ENCODE measurements at regions of chr12 and their contacts with region 1.

Region 1: DNA sequence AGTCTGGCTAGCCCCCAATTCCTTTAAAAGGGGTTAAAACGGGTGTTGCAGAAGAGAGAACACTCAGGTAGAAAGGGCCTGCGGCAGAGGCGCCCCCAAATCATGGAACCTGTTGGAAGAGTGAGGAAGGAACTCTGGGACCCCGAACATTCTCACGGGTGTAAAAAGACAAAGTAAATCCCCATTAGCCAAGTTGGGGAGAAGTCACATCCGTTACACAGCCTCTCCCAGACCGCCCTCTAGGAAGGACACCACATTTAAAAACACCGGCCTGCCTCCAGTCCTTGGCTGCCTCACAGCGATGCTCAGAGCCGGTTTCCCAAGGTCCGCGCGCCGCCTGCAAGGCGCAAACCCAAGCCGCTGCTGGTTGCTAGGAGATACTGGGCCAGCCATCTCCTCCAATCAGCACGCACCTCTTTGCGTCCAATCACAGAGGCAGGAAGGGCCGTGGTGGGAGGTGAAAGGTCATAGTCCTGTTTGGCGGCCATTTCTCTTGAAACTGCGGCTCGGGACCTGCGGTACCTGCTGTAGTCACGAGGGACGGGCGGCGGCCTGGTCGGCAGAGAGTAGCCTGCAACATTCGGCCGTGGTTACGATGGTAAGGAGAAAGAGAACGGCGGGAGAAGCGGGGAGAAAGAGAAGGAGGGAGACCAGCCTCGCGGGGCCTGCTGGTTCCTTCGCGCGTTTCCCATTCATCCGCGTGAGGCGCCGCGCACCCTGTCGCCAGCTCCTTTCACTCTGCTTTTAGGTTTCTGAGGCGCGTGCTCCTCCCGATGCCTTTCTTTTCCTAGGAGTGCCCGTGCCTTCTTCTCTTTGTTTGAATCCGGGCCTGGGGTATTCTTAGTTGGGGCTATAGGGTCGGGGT is at the start of gene SNRPF:
- DNase-seq: peak; percentile 88 to 96 (median 92)
- ATAC-seq: peak; percentile 98
- H3K4me3 ChIP-seq: peak within 1 kb of the TSS; percentile 82
- H3K4me3 Mint-ChIP-seq: no peak within 1 kb of the TSS
- H3K27ac ChIP-seq: peak within 1 kb of the TSS; percentile 86
- H3K27ac Mint-ChIP-seq: no peak within 1 kb of the TSS
- H3K4me1 ChIP-seq: peaks cover 11 to 12% of the 10 kb centered on the region in 2 donors
- H3K4me1 Mint-ChIP-seq: peaks cover 13 to 27% (median 16%) of the 10 kb centered on the region in 7 donors
- H3K27me3 ChIP-seq: no peaks in the 10 kb centered on the region
- H3K27me3 Mint-ChIP-seq: peaks cover 3 to 11% (median 7%) of the 10 kb centered on the region in 5 donors
- total RNA-seq, gene SNRPF: 19.0 to 40.4 (median 21.7) TPM

Region 2: GRCh38 chr12:95506707-95507523 is 351.8 kb before region 1 on chr12:
- CTCF ChIA-PET with region 1: no interaction called
- POLR2A ChIA-PET with region 1: no interaction called
- intact Hi-C with region 1: no loop called
- DNase-seq: no peak
- ATAC-seq: no peak
- H3K4me3 ChIP-seq: no peak overlapping the region
- H3K4me3 Mint-ChIP-seq: no peak overlapping the region
- H3K27ac ChIP-seq: no peak overlapping the region
- H3K27ac Mint-ChIP-seq: peak overlapping the region in 1 of 9 donors; percentile 24
- H3K4me1 ChIP-seq: no peaks in the 10 kb centered on the region
- H3K4me1 Mint-ChIP-seq: peaks cover 8 to 32% (median 16%) of the 10 kb centered on the region in 7 donors
- H3K27me3 ChIP-seq: no peaks in the 10 kb centered on the region
- H3K27me3 Mint-ChIP-seq: no peaks in the 10 kb centered on the region

Region 3: GRCh38 chr12:95548539-95549391 is 309.9 kb before region 1 on chr12:
- CTCF ChIA-PET with region 1: no interaction called
- POLR2A ChIA-PET with region 1: no interaction called
- intact Hi-C with region 1: loop called in 1 of 2 experiments (anchors 1 kb)
- DNase-seq: peak; percentile 66 to 81 (median 77)
- ATAC-seq: peak; percentile 94
- H3K4me3 ChIP-seq: peak overlapping the region; percentile 75
- H3K4me3 Mint-ChIP-seq: peak overlapping the region; percentile 89 to 96 (median 94)
- H3K27ac ChIP-seq: peak overlapping the region; percentile 96
- H3K27ac Mint-ChIP-seq: peak overlapping the region; percentile 70 to 98 (median 94)
- H3K4me1 ChIP-seq: peaks cover 6 to 23% of the 10 kb centered on the region in 2 donors
- H3K4me1 Mint-ChIP-seq: peaks cover 36 to 73% (median 61%) of the 10 kb centered on the region in 7 donors
- H3K27me3 ChIP-seq: no peaks in the 10 kb centered on the region
- H3K27me3 Mint-ChIP-seq: peaks cover 0 to 22% (median 7%) of the 10 kb centered on the region in 5 donors

Region 4: GRCh38 chr12:95884998-95885397 is 26.3 kb after region 1 on chr12:
- CTCF ChIA-PET with region 1: no interaction called
- POLR2A ChIA-PET with region 1: no interaction called
- intact Hi-C with region 1: no loop called
- DNase-seq: no peak
- ATAC-seq: no peak
- H3K4me3 ChIP-seq: no peak overlapping the region
- H3K4me3 Mint-ChIP-seq: no peak overlapping the region
- H3K27ac ChIP-seq: no peak overlapping the region
- H3K27ac Mint-ChIP-seq: no peak overlapping the region
- H3K4me1 ChIP-seq: no peaks in the 10 kb centered on the region
- H3K4me1 Mint-ChIP-seq: no peaks in the 10 kb centered on the region
- H3K27me3 ChIP-seq: no peaks in the 10 kb centered on the region
- H3K27me3 Mint-ChIP-seq: peaks cover 0 to 4% (median 0%) of the 10 kb centered on the region in 5 donors

Region 5: DNA sequence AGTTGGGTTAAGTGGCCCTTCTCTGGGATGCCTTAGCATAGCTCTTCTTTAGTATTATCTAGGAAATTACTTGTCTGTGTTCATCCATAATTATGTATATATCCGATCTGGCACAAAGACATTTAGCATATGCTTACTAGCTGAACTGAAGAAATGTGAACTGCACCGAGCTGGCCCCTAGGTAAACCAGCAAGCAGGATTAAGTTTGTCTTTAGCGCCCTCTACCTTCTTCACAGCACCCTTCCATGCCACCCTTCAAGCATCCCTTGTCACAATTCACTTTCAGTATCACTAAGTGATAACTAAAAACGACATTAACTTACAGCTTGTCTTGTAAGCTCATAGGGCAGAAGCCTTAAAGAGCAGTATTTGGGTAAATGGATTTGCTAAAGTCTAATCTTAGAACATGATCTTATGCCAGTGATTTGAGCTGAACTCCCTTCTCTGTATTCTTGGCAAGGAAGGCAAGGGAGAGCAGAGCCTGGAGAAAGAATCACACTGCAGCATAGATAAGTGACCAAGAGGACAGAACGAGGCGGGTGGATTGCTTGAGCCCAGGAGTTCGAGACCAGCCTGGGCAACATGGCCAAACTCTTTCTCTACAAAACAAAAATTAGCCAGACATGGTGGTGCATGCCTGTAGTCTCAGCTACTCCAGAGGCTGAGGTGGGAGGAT is 140.0 kb after region 1 on chr12:
- CTCF ChIA-PET with region 1: no interaction called
- POLR2A ChIA-PET with region 1: no interaction called
- intact Hi-C with region 1: loop called (anchors 2 to 5 kb)
- DNase-seq: peak in 7 of 9 donors; percentile 44 to 69 (median 58)
- ATAC-seq: peak; percentile 96
- H3K4me3 ChIP-seq: no peak overlapping the region
- H3K4me3 Mint-ChIP-seq: peak overlapping the region in 1 of 10 donors; percentile 11
- H3K27ac ChIP-seq: no peak overlapping the region
- H3K27ac Mint-ChIP-seq: peak overlapping the region in 5 of 9 donors; percentile 2 to 68 (median 16)
- H3K4me1 ChIP-seq: no peaks in the 10 kb centered on the region
- H3K4me1 Mint-ChIP-seq: peaks cover 0 to 13% (median 3%) of the 10 kb centered on the region in 7 donors
- H3K27me3 ChIP-seq: no peaks in the 10 kb centered on the region
- H3K27me3 Mint-ChIP-seq: no peaks in the 10 kb centered on the region

Region 6: DNA sequence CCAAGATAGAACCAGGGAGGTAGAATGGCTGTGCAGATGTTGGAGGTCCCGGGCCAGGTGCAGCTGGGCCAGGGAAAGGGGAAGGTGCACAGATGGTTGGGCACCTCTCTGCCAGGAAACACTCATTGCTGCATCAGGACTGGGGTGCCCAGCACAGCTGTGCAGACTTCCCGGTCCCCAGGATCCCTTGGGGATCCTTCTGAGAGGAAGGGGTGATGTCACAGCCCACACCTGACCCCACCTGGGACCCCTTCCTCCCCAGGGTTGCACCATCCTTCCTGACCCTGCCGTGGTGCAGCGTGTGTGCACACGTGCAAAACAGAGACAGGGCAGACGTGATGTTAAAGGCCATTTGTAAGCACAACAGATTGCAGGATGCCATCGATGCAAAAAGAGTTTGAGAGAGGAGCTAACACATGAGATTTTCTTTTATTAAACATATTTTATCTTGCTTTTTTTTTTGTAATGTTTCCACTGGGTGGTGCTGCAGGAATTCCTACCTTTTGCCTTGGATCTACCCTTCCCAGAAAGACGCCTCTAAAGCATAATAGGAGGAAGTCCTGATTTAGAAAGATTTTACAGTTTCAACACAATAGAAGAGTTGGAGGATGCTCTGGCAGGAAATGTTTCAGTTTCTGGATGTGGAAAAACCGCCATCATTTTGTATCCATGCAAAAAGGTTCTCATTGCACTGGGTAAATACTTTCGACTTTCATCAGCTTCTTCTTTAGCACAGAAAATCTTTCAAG is 350.3 kb after region 1 on chr12:
- CTCF ChIA-PET with region 1: no interaction called
- POLR2A ChIA-PET with region 1: no interaction called
- intact Hi-C with region 1: no loop called
- DNase-seq: no peak
- ATAC-seq: peak; percentile 15
- H3K4me3 ChIP-seq: no peak overlapping the region
- H3K4me3 Mint-ChIP-seq: peak overlapping the region; percentile 69 to 97 (median 85)
- H3K27ac ChIP-seq: peak overlapping the region; percentile 62
- H3K27ac Mint-ChIP-seq: peak overlapping the region; percentile 50 to 99 (median 96)
- H3K4me1 ChIP-seq: peaks cover 64 to 93% of the 10 kb centered on the region in 2 donors
- H3K4me1 Mint-ChIP-seq: peaks cover 70 to 100% (median 98%) of the 10 kb centered on the region in 7 donors
- H3K27me3 ChIP-seq: no peaks in the 10 kb centered on the region
- H3K27me3 Mint-ChIP-seq: no peaks in the 10 kb centered on the region

Region 7: DNA sequence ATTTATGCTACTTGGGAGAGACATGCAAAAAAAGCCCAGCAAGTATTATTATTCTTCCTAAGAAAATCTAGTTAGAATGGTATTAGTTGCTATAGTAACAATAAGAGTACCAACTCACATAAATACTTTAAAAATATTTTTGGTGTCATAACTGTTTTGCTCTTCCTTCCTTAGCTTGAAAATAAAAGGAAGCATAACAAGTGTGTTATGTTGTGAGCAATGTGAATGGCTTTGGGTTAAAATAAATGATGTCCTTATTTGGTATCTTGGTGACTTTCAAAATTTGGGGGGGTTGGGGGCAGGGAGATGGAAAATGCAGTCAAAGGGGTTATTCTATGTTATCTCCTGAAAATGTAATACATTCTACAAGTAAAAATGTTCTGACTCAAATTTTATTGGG is 426.4 kb after region 1 on chr12:
- CTCF ChIA-PET with region 1: no interaction called
- POLR2A ChIA-PET with region 1: no interaction called
- intact Hi-C with region 1: no loop called
- DNase-seq: no peak
- ATAC-seq: no peak
- H3K4me3 ChIP-seq: no peak overlapping the region
- H3K4me3 Mint-ChIP-seq: no peak overlapping the region
- H3K27ac ChIP-seq: no peak overlapping the region
- H3K27ac Mint-ChIP-seq: peak overlapping the region in 6 of 9 donors; percentile 0 to 60 (median 46)
- H3K4me1 ChIP-seq: no peaks in the 10 kb centered on the region
- H3K4me1 Mint-ChIP-seq: peaks cover 4 to 30% (median 22%) of the 10 kb centered on the region in 7 donors
- H3K27me3 ChIP-seq: no peaks in the 10 kb centered on the region
- H3K27me3 Mint-ChIP-seq: no peaks in the 10 kb centered on the region

Measured in naive thymus-derived CD4-positive, alpha-beta T cell (primary cell).